ENCODE measurements at regions of chr4 and their contacts with region 1.

Region 1: DNA sequence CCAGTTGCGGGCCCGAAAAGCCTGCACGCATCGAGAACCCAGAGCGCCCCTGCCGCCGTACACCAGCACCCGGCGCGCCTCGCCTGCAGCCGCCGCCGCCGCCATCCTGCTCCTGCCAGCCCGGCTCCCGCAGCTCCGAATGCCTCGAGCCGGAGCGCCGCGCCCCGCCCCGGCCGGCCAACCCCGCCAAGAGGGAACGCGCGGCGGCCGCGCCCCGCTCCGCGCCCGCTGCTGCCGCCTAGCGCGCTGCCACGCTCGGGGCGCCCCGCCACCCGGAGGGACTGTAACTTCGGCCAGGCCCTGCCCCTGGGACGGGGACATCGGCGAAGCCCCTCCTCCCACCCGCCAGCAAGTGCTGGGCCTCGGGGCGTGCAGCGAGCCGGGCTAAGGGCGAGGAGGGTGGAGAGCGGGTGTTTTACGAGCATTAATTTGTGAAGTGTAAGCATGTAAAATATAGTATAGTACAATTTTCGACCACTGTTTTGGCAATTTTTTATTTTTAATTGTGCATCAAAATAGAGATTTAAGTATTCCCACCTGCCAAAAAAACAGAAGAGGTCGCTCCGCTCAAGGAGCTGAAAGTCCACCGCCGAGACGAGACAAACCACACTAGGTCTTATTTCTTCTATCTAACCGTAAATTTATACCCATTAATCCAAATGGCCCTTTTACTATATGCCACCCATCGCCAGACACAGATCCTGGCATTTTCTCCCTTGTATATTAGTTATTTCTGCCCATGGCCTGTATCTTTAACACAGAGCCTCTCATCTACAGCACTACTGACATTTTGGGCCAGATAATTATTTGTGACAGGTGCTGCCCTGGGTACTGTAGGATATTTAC is at the start of gene QDPR:
- DNase-seq: peak; percentile 70
- H3K4me3 Mint-ChIP-seq: peak within 1 kb of the TSS; percentile 99
- H3K27ac Mint-ChIP-seq: peak within 1 kb of the TSS; percentile 84
- H3K4me1 Mint-ChIP-seq: peaks cover 22% of the 10 kb centered on the region
- H3K27me3 Mint-ChIP-seq: peaks cover 14% of the 10 kb centered on the region
- total RNA-seq, gene QDPR: 28.2 and 34.3 TPM in 2 replicates

Region 2: GRCh38 chr4:17614416-17615299 is 102.5 kb after region 1 on chr4 and contains the start of gene MED28:
- intact Hi-C with region 1: loop called (anchors 1 kb)
- DNase-seq: peak; percentile 92
- H3K4me3 Mint-ChIP-seq: peak within 1 kb of the TSS; percentile 90
- H3K27ac Mint-ChIP-seq: peak within 1 kb of the TSS; percentile 91
- H3K4me1 Mint-ChIP-seq: peaks cover 24% of the 10 kb centered on the region
- H3K27me3 Mint-ChIP-seq: no peaks in the 10 kb centered on the region
- total RNA-seq, gene MED28: 53.2 and 55.7 TPM in 2 replicates